H1 (cell line): ENCODE measurements at regions of chr11 and their contacts with region 1.

Region 1: GRCh38 chr11:27485930-27486773 is 13.6 kb upstream of the LGR4 start:
- DNase-seq: no peak
- H3K4me3 ChIP-seq: no peak overlapping the region
- H3K27ac ChIP-seq: no peak overlapping the region
- H3K4me1 ChIP-seq: peaks cover 0 to 4% (median 2%) of the 10 kb centered on the region in 4 experiments; a peak in 3 of 7 replicates
- H3K27me3 ChIP-seq: no peaks in the 10 kb centered on the region
- CTCF ChIP-seq: peak in 2 of 3 experiments; percentile 63 to 78; a peak in 2 of 4 replicates
- EP300 ChIP-seq: no peak
- POLR2A ChIP-seq: no peak
- RAD21 ChIP-seq: peak; percentile 87 to 97

Region 2: DNA sequence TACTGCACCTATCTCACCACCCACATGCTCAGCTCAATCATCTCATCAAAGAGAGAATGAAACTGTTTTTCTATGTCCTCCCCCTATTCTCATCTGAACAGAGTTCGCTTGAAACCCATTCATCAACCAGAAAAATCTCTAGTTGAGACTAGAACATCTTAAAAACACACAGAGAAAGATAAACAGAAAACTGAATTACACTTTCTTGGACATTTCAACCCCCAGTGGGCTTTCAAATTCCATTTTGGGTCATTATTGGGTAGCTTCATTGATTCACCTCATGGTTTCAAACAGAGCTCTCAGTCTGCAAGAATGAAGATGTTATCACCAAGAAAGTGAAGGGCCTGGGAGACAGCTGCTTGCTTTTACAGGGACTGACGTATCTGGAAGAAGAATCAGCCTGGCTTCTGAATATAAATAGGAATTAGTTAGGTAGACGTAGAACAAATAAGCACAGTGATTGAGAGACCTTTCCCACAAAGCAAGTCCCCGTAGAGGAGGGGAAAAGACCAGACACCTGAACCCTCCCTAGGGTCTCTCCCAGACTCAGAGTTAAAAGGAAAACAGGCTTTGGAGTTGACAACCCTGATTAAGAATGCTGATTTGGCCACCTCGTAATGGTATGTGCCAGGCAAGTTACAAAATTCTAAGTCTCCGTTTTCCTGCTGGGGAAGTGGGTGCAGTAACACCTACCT is 289.8 kb before region 1 on chr11:
- CTCF ChIA-PET with region 1: interaction called, 25 read pairs
- POLR2A ChIA-PET with region 1: no interaction called
- DNase-seq: no peak
- H3K4me3 ChIP-seq: no peak overlapping the region
- H3K27ac ChIP-seq: no peak overlapping the region
- H3K4me1 ChIP-seq: peaks cover 0 to under 1% (median 0%) of the 10 kb centered on the region in 4 experiments; a peak in 1 of 7 replicates
- H3K27me3 ChIP-seq: no peaks in the 10 kb centered on the region
- CTCF ChIP-seq: no peak
- EP300 ChIP-seq: no peak
- POLR2A ChIP-seq: no peak
- RAD21 ChIP-seq: no peak

Region 3: DNA sequence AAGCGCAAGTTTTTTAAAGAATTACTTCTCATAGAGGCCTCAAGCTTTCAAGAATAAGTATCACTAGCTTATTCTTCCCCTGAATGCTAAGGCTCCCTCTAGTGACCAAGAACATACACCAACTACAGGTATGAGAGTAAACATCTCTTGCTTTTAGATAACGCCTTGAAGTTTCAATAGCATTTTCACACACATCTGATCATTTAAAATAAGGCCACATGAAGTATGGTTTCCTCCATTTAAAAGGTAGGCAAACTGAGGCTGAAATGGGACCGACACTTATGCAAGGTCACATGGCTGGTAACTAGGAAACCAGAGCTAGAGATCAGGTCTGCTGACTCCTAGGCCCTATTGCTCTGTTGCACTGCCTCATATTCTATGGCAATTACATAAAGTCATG is 189.7 kb before region 1 on chr11:
- CTCF ChIA-PET with region 1: interaction called, 21 read pairs
- POLR2A ChIA-PET with region 1: no interaction called
- DNase-seq: no peak
- H3K4me3 ChIP-seq: no peak overlapping the region
- H3K27ac ChIP-seq: no peak overlapping the region
- H3K4me1 ChIP-seq: peaks cover 0 to 3% (median 0%) of the 10 kb centered on the region in 4 experiments; a peak in 2 of 7 replicates
- H3K27me3 ChIP-seq: no peaks in the 10 kb centered on the region
- CTCF ChIP-seq: peak in 2 of 3 experiments; percentile 53 to 75; a peak in 2 of 4 replicates
- EP300 ChIP-seq: no peak
- POLR2A ChIP-seq: no peak
- RAD21 ChIP-seq: peak; percentile 74 to 75

Region 4: DNA sequence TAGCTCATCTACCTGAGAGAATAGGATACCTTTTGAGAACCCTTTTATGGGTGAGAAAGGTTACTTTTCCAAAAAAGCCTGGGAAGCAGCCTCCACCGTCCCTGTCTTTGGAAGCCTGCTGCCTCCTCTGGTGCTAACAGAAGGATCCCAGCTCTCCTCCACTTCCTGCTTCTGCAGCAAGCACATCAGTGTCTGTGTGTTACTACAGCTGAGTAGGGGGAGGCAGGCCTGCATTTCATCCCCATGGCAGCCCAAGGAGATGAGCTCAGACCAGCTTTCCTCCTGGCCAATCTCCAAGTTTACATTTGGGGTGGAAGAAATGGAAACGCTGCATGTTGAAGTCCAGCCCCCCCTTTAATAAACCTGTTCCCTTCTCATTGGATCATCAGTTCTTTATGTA is 115.8 kb before region 1 on chr11:
- CTCF ChIA-PET with region 1: interaction called, 55 read pairs
- POLR2A ChIA-PET with region 1: no interaction called
- DNase-seq: no peak
- H3K4me3 ChIP-seq: no peak overlapping the region
- H3K27ac ChIP-seq: no peak overlapping the region
- H3K4me1 ChIP-seq: no peaks in the 10 kb centered on the region
- H3K27me3 ChIP-seq: no peaks in the 10 kb centered on the region
- CTCF ChIP-seq: no peak
- EP300 ChIP-seq: no peak
- POLR2A ChIP-seq: no peak
- RAD21 ChIP-seq: no peak; a peak in 1 of 4 replicates

Region 5: DNA sequence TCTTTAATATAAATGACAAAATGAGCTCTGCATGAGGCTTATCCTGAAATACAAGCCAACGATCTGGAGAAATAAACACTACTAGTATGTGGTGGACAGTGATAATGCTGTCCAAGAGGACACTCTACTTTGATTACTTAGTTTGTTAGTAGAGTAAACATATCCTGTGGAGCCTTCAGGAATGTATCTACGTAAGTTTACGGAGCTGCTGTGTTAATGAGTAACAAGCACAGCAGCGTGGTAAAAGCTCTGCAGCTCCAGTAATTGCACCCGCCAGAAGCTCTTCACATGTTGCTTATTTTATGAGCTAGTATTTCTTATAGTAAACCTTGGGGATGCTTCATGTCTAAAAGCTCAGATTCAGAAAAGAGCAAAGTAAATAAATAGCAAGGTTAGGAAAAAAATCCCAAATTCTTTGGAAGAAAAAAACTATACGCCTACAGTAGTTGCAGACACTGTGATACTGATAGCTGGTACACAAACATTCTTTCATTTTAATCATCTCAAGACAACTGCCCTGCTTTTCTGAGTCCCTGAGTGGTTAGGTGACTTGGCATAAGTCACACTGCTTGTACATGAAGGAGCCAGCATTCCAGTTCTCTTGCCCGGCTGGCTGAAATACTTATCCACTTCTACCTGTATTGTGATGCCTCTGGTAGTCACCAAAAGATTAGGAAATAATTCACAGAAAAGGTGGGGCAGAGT is 90.4 kb before region 1 on chr11:
- CTCF ChIA-PET with region 1: interaction called, 30 read pairs
- POLR2A ChIA-PET with region 1: no interaction called
- DNase-seq: no peak
- H3K4me3 ChIP-seq: no peak overlapping the region
- H3K27ac ChIP-seq: no peak overlapping the region
- H3K4me1 ChIP-seq: peaks cover 2 to 20% (median 16%) of the 10 kb centered on the region in 4 experiments; a peak in 6 of 7 replicates
- H3K27me3 ChIP-seq: no peaks in the 10 kb centered on the region
- CTCF ChIP-seq: no peak
- EP300 ChIP-seq: no peak
- POLR2A ChIP-seq: no peak
- RAD21 ChIP-seq: no peak

Region 6: DNA sequence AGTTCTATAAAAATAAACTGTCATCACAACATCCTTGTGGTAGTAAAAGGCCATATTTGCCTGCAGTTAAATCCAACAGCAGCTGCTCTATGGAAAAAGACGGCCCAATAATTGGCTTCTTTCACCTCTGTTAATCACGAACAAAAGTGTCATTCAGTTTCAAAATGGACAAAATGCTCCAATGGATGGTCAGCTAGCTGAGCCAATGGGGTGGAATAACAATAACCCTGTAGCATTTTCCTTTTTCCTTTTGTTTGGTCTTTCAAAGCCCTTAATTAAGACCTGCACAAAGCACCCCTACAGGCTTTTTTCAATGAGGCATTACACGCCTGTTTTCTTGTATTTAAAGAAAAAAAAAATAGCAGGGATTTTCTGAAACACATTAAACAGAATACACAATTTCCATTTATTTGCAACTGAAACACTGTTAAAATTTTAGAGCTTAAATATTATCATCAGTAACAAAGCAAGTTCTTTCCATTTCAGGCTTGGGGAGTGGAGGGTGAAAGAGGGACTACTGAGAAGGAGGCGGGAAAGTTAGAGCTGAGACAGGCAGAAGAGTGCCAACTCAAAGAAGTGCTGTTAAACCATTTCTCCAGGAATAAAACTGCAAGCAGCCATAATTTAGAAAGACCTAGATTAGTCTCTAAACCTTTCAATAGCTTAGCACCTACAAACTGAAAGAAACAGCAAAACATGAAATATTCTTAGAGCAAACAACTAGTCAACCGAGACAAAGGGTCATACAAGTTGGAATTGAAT is 42.2 kb before region 1 on chr11:
- CTCF ChIA-PET with region 1: interaction called, 11 read pairs
- POLR2A ChIA-PET with region 1: no interaction called
- DNase-seq: no peak
- H3K4me3 ChIP-seq: peak overlapping the region in 1 of 4 experiments; percentile 48; a peak in 2 of 8 replicates
- H3K27ac ChIP-seq: peak overlapping the region; percentile 34; the same call in 1 of the 2 replicates
- H3K4me1 ChIP-seq: peaks cover 14 to 35% (median 26%) of the 10 kb centered on the region in 4 experiments; a peak in 6 of 7 replicates
- H3K27me3 ChIP-seq: no peaks in the 10 kb centered on the region
- CTCF ChIP-seq: no peak
- EP300 ChIP-seq: no peak; a peak in 1 of 3 replicates
- POLR2A ChIP-seq: no peak
- RAD21 ChIP-seq: no peak

Region 7: DNA sequence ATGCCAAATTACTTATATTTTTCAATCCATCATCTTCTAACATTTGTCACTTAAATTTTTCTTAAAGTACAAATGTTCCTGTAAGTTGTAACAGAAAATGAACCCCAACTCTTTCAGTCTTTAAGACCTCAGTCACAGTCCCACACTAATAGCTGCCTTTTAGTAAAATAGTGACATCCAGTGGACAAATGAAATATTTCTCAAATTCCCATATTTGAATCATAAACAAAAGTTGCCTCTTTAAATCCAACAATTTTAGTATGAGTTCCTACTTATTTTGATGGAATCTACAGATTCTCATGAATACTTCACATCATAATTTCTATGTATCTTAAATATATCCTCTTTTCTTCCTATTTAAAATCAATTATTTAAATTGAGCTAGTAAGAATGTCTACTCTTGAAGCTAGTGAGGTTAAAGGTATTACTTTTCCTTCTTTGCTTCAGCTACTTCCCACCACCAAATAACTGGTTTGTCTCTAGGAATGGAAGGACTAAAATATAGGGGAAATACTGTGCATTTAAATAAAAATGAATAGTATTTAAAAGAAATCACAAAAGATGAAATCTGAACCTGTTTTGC is 11.2 kb after region 1 on chr11:
- CTCF ChIA-PET with region 1: interaction called, 86 read pairs
- POLR2A ChIA-PET with region 1: interaction called, 5 read pairs
- DNase-seq: no peak
- H3K4me3 ChIP-seq: no peak overlapping the region
- H3K27ac ChIP-seq: no peak overlapping the region
- H3K4me1 ChIP-seq: no peaks in the 10 kb centered on the region
- H3K27me3 ChIP-seq: no peaks in the 10 kb centered on the region
- CTCF ChIP-seq: no peak
- EP300 ChIP-seq: no peak
- POLR2A ChIP-seq: no peak
- RAD21 ChIP-seq: no peak; a peak in 1 of 4 replicates

Region 8: DNA sequence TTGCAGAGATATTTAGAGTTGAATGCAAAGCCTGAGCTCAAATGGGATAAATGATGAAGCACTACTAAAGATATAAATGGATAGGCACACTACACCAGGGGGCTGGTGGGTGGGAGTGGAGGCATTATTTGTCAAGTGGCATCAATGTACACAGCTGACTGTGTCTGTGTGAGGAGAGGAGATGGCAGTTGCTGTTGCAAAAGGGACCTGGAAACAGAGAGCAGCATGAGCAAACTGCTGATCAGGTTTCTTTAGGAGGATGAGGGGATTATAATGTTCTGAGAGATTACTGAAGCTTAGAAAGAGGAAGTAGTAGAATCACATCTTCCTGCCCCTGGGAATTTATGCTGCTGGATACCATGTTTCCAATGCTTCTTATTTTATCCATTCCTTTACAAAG is 59.8 kb after region 1 on chr11:
- CTCF ChIA-PET with region 1: no interaction called
- POLR2A ChIA-PET with region 1: no interaction called
- DNase-seq: no peak
- H3K4me3 ChIP-seq: no peak overlapping the region
- H3K27ac ChIP-seq: no peak overlapping the region
- H3K4me1 ChIP-seq: no peaks in the 10 kb centered on the region
- H3K27me3 ChIP-seq: no peaks in the 10 kb centered on the region
- CTCF ChIP-seq: no peak
- EP300 ChIP-seq: no peak
- POLR2A ChIP-seq: no peak
- RAD21 ChIP-seq: no peak

Region 9: DNA sequence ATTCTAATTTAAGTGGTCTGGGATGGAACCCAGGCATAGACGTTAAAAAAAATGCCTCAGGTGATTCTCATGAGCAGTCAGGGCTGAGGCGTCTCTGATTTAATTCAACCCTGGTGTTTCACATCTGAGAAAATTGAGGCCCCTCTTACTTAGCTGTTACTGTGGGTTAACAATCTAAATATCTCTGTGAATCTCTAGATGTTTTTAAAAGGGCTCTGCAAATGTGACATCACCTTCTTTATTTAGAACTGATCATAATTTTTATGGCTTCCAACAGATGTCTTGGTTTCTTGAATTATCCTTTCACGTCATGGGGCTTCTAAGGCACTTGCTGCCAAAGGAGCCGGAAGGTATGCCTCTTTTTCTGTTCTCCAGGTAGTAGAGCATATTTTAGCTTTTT is 96.5 kb after region 1 on chr11:
- CTCF ChIA-PET with region 1: no interaction called
- POLR2A ChIA-PET with region 1: no interaction called
- DNase-seq: no peak
- H3K4me3 ChIP-seq: no peak overlapping the region
- H3K27ac ChIP-seq: no peak overlapping the region
- H3K4me1 ChIP-seq: no peaks in the 10 kb centered on the region
- H3K27me3 ChIP-seq: no peaks in the 10 kb centered on the region; a peak in 2 of 7 replicates
- CTCF ChIP-seq: no peak
- EP300 ChIP-seq: no peak
- POLR2A ChIP-seq: no peak
- RAD21 ChIP-seq: no peak